ENCODE measurements at regions of chr3 and their contacts with region 1.

Region 1: GRCh38 chr3:32467333-32468070 is 35.1 kb downstream of the CMTM6 start:
- DNase-seq: peak; percentile 65 to 91 (median 76)
- ATAC-seq: peak; percentile 90
- H3K4me3 ChIP-seq: peak overlapping the region; percentile 46 to 51
- H3K4me3 Mint-ChIP-seq: peak overlapping the region; percentile 71
- H3K27ac ChIP-seq: peak overlapping the region; percentile 32 to 47
- H3K27ac Mint-ChIP-seq: peak overlapping the region; percentile 87
- H3K4me1 ChIP-seq: peaks cover 22% of the 10 kb centered on the region
- H3K4me1 Mint-ChIP-seq: peaks cover 47% of the 10 kb centered on the region
- H3K27me3 ChIP-seq: no peaks in the 10 kb centered on the region
- H3K27me3 Mint-ChIP-seq: no peaks in the 10 kb centered on the region
- CTCF ChIP-seq: peak; percentile 98

Region 2: DNA sequence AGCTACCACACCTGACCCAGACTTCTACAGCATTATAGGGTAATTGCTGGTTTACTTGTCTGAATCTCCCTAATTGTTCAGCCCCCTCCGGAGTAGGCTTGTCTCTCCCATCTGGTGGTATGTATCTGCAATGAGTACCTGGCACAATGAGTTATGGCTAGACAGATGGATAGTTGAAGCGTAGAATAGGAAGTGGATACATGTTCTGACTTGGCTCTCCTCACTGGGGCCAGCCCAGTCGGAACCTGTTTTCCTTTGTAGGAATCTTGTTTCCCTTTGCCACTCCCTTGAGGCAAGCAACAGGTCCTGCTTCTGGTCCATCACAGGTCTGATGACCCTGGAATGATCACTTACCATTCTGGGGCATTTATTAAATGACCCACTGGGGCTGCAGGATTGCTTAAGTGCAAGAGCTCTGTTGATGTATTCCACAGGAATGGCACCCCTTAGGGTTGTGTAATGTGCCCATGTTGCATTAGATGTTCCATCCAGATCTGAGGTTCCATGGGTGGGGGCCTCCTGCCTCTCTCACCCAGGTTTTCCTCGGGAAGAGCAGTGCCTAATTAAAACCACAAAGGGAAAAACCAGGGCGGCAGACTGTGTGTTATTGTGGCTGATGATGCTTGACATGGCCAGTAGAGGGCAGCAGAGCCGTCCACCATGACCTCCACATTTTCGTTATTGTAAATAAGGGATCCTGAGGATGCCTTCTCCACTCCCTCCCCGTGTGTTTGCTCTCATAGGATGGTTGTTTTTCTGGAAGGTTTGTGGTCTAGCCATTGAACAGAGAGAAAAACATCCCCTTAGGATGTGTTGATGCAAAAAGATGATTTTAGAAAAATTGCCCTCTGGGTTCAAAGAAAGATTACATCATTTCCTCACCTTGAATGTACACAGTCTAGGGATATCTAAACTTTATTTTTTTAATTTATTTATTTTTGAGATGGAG is 171.0 kb before region 1 on chr3:
- CTCF ChIA-PET with region 1: interaction called, 47 read pairs
- POLR2A ChIA-PET with region 1: interaction called, 4 read pairs
- intact Hi-C with region 1: loop called (anchors 1 kb)
- DNase-seq: peak; percentile 16 to 79 (median 62)
- ATAC-seq: peak; percentile 76
- H3K4me3 ChIP-seq: no peak overlapping the region
- H3K4me3 Mint-ChIP-seq: peak overlapping the region; percentile 61
- H3K27ac ChIP-seq: no peak overlapping the region
- H3K27ac Mint-ChIP-seq: peak overlapping the region; percentile 85
- H3K4me1 ChIP-seq: peaks cover 7% of the 10 kb centered on the region
- H3K4me1 Mint-ChIP-seq: peaks cover 15% of the 10 kb centered on the region
- H3K27me3 ChIP-seq: no peaks in the 10 kb centered on the region
- H3K27me3 Mint-ChIP-seq: no peaks in the 10 kb centered on the region
- CTCF ChIP-seq: peak; percentile 91

Region 3: GRCh38 chr3:32374788-32375595 is 92.5 kb before region 1 on chr3:
- CTCF ChIA-PET with region 1: interaction called, 225 read pairs
- POLR2A ChIA-PET with region 1: interaction called, 8 read pairs
- intact Hi-C with region 1: loop called (anchors 1 kb)
- DNase-seq: peak; percentile 40 to 88 (median 66)
- ATAC-seq: peak; percentile 32
- H3K4me3 ChIP-seq: no peak overlapping the region
- H3K4me3 Mint-ChIP-seq: no peak overlapping the region
- H3K27ac ChIP-seq: no peak overlapping the region
- H3K27ac Mint-ChIP-seq: peak overlapping the region; percentile 18
- H3K4me1 ChIP-seq: peaks cover 31% of the 10 kb centered on the region
- H3K4me1 Mint-ChIP-seq: peaks cover 41% of the 10 kb centered on the region
- H3K27me3 ChIP-seq: no peaks in the 10 kb centered on the region
- H3K27me3 Mint-ChIP-seq: no peaks in the 10 kb centered on the region
- CTCF ChIP-seq: peak; percentile 78

Region 4: DNA sequence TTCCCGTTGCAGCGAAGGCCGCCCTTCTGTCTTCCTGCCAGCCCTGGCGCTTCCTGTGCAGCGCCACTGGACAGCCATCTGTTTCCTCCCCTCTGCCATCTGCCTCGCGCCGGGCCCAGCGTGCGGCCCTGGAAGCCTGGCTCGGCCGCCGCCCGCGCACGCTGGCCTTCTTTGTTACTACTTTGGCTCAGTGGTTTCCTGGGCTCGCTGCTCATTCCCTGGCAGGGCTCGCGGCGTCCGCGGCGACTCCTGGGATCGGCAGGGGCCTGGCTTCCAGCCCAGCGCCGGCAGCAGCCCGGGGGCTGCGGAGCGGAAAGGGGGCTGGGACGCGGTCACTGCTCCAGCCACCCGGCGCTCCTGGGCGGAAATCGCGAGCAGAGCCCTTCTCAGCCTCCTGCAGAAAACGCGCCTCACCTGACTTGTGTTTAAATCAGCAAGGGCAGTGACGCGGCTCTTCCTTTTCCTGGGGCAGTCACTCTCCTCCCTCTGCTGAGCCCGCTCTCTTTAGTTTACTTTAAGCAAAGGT is 65.9 kb before region 1 on chr3:
- CTCF ChIA-PET with region 1: interaction called, 105 read pairs
- POLR2A ChIA-PET with region 1: interaction called, 4 read pairs
- intact Hi-C with region 1: loop called (anchors 1 to 2 kb)
- DNase-seq: peak in 8 of 9 experiments; percentile 50 to 81 (median 70)
- ATAC-seq: peak; percentile 73
- H3K4me3 ChIP-seq: peak overlapping the region; percentile 53 to 66
- H3K4me3 Mint-ChIP-seq: peak overlapping the region; percentile 86
- H3K27ac ChIP-seq: peak overlapping the region; percentile 81 to 83
- H3K27ac Mint-ChIP-seq: peak overlapping the region; percentile 99
- H3K4me1 ChIP-seq: peaks cover 46% of the 10 kb centered on the region
- H3K4me1 Mint-ChIP-seq: peaks cover 78% of the 10 kb centered on the region
- H3K27me3 ChIP-seq: no peaks in the 10 kb centered on the region
- H3K27me3 Mint-ChIP-seq: no peaks in the 10 kb centered on the region
- CTCF ChIP-seq: no peak

Region 5: DNA sequence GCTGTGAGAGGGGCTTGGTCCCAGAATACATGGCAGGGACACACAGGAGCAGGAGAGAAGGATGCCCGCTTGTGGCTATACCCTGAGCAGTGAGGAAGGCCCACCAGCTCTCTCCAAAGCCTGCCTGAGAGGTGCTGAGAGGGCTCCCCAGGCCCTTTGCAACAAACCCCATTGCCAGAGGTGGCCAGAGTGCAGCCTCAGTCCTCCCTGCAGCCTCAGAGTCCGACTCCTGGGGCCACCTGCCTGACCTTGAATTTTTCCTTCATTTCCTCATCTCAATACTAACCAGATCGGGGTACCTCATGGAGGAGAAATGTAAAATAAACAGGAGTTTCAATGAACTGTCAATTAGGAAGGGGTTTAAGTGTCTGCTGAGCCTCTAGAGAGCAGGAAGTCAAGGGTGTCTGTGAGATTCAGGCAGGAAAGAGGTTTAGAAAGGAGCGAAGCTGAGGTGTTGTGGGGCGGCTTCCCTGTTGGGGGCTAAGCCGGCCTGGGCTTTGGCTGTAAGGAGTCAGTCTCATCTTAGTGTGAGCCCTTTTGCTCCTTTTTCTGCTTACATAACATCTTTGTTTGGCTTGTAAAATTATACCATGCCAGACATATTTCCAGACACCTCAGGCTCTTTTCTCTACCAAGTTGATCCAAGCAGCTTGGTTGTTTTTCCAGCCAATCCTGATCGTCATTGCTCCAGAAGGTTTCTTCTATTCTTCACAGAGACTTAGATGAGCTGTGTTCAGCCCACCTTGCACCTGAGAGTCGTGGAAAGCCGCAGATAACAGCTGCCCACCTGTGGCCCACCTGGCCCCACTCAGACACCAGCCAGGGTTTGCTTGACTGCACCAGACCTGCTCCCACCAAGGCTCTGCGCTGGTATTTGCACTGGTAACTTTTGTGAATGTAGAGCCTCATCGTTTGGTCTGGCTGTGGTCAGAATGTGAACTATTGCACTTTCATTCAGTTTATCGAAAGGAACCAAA is 39.1 kb before region 1 on chr3:
- CTCF ChIA-PET with region 1: interaction called, 70 read pairs
- POLR2A ChIA-PET with region 1: interaction called, 8 read pairs
- intact Hi-C with region 1: loop called in 1 of 2 experiments (anchors 5 kb)
- DNase-seq: peak in 8 of 9 experiments; percentile 29 to 82 (median 55)
- ATAC-seq: peak; percentile 59
- H3K4me3 ChIP-seq: peak overlapping the region in 1 of 2 experiments; percentile 26
- H3K4me3 Mint-ChIP-seq: peak overlapping the region; percentile 76
- H3K27ac ChIP-seq: peak overlapping the region; percentile 58 to 81
- H3K27ac Mint-ChIP-seq: peak overlapping the region; percentile 96
- H3K4me1 ChIP-seq: peaks cover 98% of the 10 kb centered on the region
- H3K4me1 Mint-ChIP-seq: peaks cover 94% of the 10 kb centered on the region
- H3K27me3 ChIP-seq: no peaks in the 10 kb centered on the region
- H3K27me3 Mint-ChIP-seq: no peaks in the 10 kb centered on the region
- CTCF ChIP-seq: no peak

Region 6: GRCh38 chr3:32484436-32484835 is 16.9 kb after region 1 on chr3:
- CTCF ChIA-PET with region 1: interaction called, 12 read pairs
- POLR2A ChIA-PET with region 1: interaction called, 3 read pairs
- intact Hi-C with region 1: no loop called
- DNase-seq: peak in 1 of 9 experiments; percentile 37
- ATAC-seq: peak; percentile 29
- H3K4me3 ChIP-seq: no peak overlapping the region
- H3K4me3 Mint-ChIP-seq: no peak overlapping the region
- H3K27ac ChIP-seq: no peak overlapping the region
- H3K27ac Mint-ChIP-seq: peak overlapping the region; percentile 23
- H3K4me1 ChIP-seq: peaks cover 4% of the 10 kb centered on the region
- H3K4me1 Mint-ChIP-seq: peaks cover 21% of the 10 kb centered on the region
- H3K27me3 ChIP-seq: no peaks in the 10 kb centered on the region
- H3K27me3 Mint-ChIP-seq: no peaks in the 10 kb centered on the region
- CTCF ChIP-seq: no peak

Region 7: GRCh38 chr3:32835961-32836360 is 368.5 kb after region 1 on chr3:
- CTCF ChIA-PET with region 1: no interaction called
- POLR2A ChIA-PET with region 1: no interaction called
- intact Hi-C with region 1: no loop called
- DNase-seq: no peak
- ATAC-seq: no peak
- H3K4me3 ChIP-seq: no peak overlapping the region
- H3K4me3 Mint-ChIP-seq: no peak overlapping the region
- H3K27ac ChIP-seq: no peak overlapping the region
- H3K27ac Mint-ChIP-seq: no peak overlapping the region
- H3K4me1 ChIP-seq: no peaks in the 10 kb centered on the region
- H3K4me1 Mint-ChIP-seq: no peaks in the 10 kb centered on the region
- H3K27me3 ChIP-seq: no peaks in the 10 kb centered on the region
- H3K27me3 Mint-ChIP-seq: peaks cover 15% of the 10 kb centered on the region
- CTCF ChIP-seq: no peak

Measured in CD8-positive, alpha-beta T cell (primary cell).